ENCODE measurements at regions of chr6 and their contacts with region 1.

Region 1: GRCh38 chr6:119521251-119521650 is 171.7 kb upstream of the MAN1A1 start:
- DNase-seq: no peak
- H3K4me3 ChIP-seq: no peak overlapping the region
- H3K27ac ChIP-seq: peak overlapping the region; percentile 96
- H3K4me1 ChIP-seq: peaks cover 72% of the 10 kb centered on the region
- CTCF ChIP-seq: no peak

Region 2: GRCh38 chr6:119442776-119443184 is 78.5 kb before region 1 on chr6:
- CTCF ChIA-PET with region 1: no interaction called
- POLR2A ChIA-PET with region 1: interaction called, 7 read pairs
- intact Hi-C with region 1: loop called (anchors 1 kb)
- DNase-seq: peak; percentile 99
- H3K4me3 ChIP-seq: peak overlapping the region; percentile 25
- H3K27ac ChIP-seq: peak overlapping the region; percentile 94
- H3K4me1 ChIP-seq: peaks cover 76% of the 10 kb centered on the region
- CTCF ChIP-seq: no peak

Region 3: GRCh38 chr6:119501798-119502483 is 19.3 kb before region 1 on chr6:
- CTCF ChIA-PET with region 1: no interaction called
- POLR2A ChIA-PET with region 1: interaction called, 11 read pairs
- intact Hi-C with region 1: no loop called
- DNase-seq: peak; percentile 69
- H3K4me3 ChIP-seq: no peak overlapping the region
- H3K27ac ChIP-seq: peak overlapping the region; percentile 20
- H3K4me1 ChIP-seq: peaks cover 31% of the 10 kb centered on the region
- CTCF ChIP-seq: no peak

Region 4: GRCh38 chr6:119533603-119534279 is 12.5 kb after region 1 on chr6:
- CTCF ChIA-PET with region 1: no interaction called
- POLR2A ChIA-PET with region 1: interaction called, 14 read pairs
- intact Hi-C with region 1: no loop called
- DNase-seq: peak; percentile 85
- H3K4me3 ChIP-seq: peak overlapping the region; percentile 53
- H3K27ac ChIP-seq: peak overlapping the region; percentile 99
- H3K4me1 ChIP-seq: peaks cover 73% of the 10 kb centered on the region
- CTCF ChIP-seq: no peak

Measured in OCI-LY7 (cell line).